Common myeloid progenitor, CD34-positive (primary cell): ENCODE measurements at regions of chr3 and their contacts with region 1.

Region 1: DNA sequence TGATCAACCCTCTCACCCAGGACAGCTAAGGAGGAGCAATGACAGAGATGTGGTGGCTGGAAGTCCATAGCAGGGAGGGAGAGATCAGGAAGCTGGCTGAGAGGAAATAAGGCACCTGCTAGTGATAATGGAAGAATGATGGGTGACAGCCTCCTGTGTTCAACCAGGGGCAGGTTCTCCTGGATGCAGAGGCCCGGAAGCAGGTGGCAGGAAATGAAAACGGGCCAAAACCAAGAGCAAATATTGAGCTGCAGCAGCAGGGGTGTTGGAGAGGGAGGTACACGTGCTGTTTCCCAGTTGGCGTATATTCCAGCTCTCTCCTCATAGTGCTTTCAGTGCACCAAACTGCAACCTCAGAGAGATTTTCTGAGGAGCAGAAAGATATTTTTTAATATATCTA is 213.4 kb upstream of the TBL1XR1 start:
- DNase-seq: peak; percentile 77 to 95 (median 92)
- H3K4me3 ChIP-seq: peak overlapping the region in 2 of 7 experiments; percentile 37 to 42
- H3K27ac ChIP-seq: no peak overlapping the region
- H3K4me1 ChIP-seq: peaks cover 8 to 18% (median 10%) of the 10 kb centered on the region in 4 experiments
- H3K27me3 ChIP-seq: no peaks in the 10 kb centered on the region

Region 2: DNA sequence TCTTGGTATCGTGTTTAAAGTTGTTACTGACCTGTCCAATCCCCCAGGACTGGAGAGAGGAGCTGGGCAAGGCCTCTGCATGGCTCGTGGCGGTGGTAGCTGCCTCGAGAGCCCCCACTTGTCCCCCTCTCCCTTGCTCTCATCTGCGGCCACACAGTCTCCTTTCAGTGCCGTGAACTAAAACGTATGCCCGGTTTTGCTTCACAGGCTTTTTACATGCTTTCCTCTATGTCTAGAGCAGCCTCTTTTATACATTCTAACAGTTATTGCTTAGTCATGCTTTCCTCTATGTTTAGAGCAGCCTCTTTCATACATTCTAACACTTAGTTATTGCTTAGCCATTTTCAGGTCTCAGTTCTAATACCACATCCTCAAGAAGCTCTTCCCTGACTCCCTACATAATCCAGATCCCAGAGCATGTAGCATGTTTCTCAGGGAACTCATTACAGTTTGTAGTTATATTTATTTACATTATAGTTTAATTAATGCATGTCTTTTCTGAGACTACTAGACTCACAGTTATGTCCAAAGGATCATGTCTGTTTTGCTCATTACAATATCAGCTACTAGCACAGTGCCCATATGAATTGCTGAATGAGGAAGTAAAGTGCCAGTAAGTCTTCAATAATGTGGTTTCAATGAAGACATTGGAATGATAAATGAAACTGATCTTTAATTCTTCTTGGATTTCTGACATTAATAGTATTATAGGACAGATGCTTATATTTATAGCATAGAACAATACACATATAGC is 146.9 kb before region 1 on chr3:
- CTCF ChIA-PET with region 1: no interaction called
- POLR2A ChIA-PET with region 1: no interaction called
- DNase-seq: peak; percentile 33 to 70 (median 64)
- H3K4me3 ChIP-seq: no peak overlapping the region
- H3K27ac ChIP-seq: peak overlapping the region in 1 of 2 experiments; percentile 60
- H3K4me1 ChIP-seq: peaks cover 4 to 12% (median 9%) of the 10 kb centered on the region in 4 experiments
- H3K27me3 ChIP-seq: no peaks in the 10 kb centered on the region

Region 3: GRCh38 chr3:177424521-177424920 is 13.8 kb after region 1 on chr3:
- CTCF ChIA-PET with region 1: interaction called, 11 read pairs
- POLR2A ChIA-PET with region 1: no interaction called
- DNase-seq: peak in 2 of 3 donors; percentile 52 to 54
- H3K4me3 ChIP-seq: no peak overlapping the region
- H3K27ac ChIP-seq: no peak overlapping the region
- H3K4me1 ChIP-seq: peaks cover 8 to 42% (median 33%) of the 10 kb centered on the region in 4 experiments
- H3K27me3 ChIP-seq: no peaks in the 10 kb centered on the region